Endothelial cell of umbilical vein (primary cell): ENCODE measurements at regions of chr19 and their contacts with region 1.

Region 1: DNA sequence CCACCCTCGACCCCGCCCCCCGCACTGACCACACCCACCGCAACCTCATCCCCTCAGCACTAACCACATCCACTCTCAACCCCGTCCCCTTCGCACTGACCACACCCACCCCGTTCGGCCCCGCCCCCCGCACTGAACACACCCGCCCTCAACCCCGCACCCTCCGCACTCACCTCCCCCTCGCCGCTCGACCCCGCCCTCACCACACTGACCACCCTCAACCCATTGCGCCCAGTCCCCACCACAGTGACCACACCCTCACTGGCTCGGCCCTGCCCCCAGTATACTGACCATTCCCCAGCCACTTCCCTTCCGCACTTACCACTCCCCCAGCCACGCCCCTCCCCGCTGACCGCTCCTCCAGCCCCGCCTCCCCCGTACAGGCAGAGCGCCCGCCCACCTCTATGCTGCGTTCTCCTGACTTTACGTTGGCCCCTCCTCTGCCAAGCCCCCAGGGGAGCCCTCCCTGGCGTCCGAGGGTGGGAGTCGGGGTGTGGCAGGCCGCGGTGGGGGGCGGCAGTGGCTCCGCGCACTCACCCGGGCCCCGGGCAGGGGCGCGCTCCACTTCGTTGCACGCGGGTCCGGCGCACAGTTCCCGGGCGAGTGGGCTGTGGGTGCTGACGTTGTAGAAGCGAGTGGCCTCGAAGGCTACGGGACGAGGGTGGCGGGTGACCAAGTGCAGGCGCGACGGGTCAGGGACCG is 8.5 kb downstream of the F2RL3 start:
- DNase-seq: peak; percentile 97
- H3K4me3 ChIP-seq: peak overlapping the region; percentile 50 to 60 (median 57)
- H3K27ac ChIP-seq: peak overlapping the region; percentile 39
- H3K4me1 ChIP-seq: no peaks in the 10 kb centered on the region
- H3K27me3 ChIP-seq: no peaks in the 10 kb centered on the region
- CTCF ChIP-seq: no peak
- POLR2A ChIP-seq: no peak

Region 2: GRCh38 chr19:16771618-16772017 is 125.7 kb before region 1 on chr19:
- CTCF ChIA-PET with region 1: interaction called, 5 read pairs
- POLR2A ChIA-PET with region 1: no interaction called
- dilution Hi-C with region 1: no loop called
- intact Hi-C with region 1: loop called (anchors 1 kb)
- DNase-seq: peak; percentile 81
- H3K4me3 ChIP-seq: no peak overlapping the region
- H3K27ac ChIP-seq: no peak overlapping the region
- H3K4me1 ChIP-seq: no peaks in the 10 kb centered on the region
- H3K27me3 ChIP-seq: no peaks in the 10 kb centered on the region
- CTCF ChIP-seq: peak; percentile 73 to 79
- POLR2A ChIP-seq: no peak

Region 3: GRCh38 chr19:16778796-16779411 is 118.4 kb before region 1 on chr19:
- CTCF ChIA-PET with region 1: interaction called, 13 read pairs
- POLR2A ChIA-PET with region 1: no interaction called
- dilution Hi-C with region 1: no loop called
- intact Hi-C with region 1: loop called (anchors 1 kb)
- DNase-seq: peak; percentile 59
- H3K4me3 ChIP-seq: no peak overlapping the region
- H3K27ac ChIP-seq: no peak overlapping the region
- H3K4me1 ChIP-seq: no peaks in the 10 kb centered on the region
- H3K27me3 ChIP-seq: peaks cover 1 to 6% of the 10 kb centered on the region in 2 experiments
- CTCF ChIP-seq: peak; percentile 59 to 80
- POLR2A ChIP-seq: no peak

Region 4: GRCh38 chr19:16836115-16837034 is 60.9 kb before region 1 on chr19:
- CTCF ChIA-PET with region 1: no interaction called
- POLR2A ChIA-PET with region 1: no interaction called
- dilution Hi-C with region 1: no loop called
- intact Hi-C with region 1: loop called (anchors 1 kb)
- DNase-seq: no peak
- H3K4me3 ChIP-seq: no peak overlapping the region
- H3K27ac ChIP-seq: no peak overlapping the region
- H3K4me1 ChIP-seq: peaks cover 33% of the 10 kb centered on the region
- H3K27me3 ChIP-seq: no peaks in the 10 kb centered on the region
- CTCF ChIP-seq: peak in 1 of 2 donors; percentile 4
- POLR2A ChIP-seq: no peak

Region 5: DNA sequence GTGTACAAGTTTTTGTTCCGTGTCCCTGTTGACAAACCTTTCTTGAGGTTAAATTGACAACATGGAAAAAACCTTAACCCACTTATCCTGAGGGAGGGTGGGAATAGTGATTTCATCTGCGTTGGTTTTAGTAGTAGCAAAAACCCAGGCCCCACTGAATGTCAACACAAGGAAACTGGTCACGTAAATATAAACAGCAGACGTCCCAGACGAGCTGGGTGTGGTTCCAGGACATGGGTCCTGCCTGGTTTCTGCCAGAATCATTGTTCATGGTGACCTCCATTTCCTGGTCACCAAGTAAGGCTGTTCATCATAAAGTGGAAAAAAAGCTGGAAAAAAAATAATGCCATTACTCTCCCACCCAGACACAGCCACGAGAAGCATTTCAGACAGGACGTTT is 25.4 kb before region 1 on chr19:
- CTCF ChIA-PET with region 1: no interaction called
- POLR2A ChIA-PET with region 1: no interaction called
- dilution Hi-C with region 1: no loop called
- intact Hi-C with region 1: loop called (anchors 1 kb)
- DNase-seq: peak; percentile 94
- H3K4me3 ChIP-seq: no peak overlapping the region
- H3K27ac ChIP-seq: peak overlapping the region; percentile 64
- H3K4me1 ChIP-seq: peaks cover 21% of the 10 kb centered on the region
- H3K27me3 ChIP-seq: no peaks in the 10 kb centered on the region
- CTCF ChIP-seq: no peak
- POLR2A ChIP-seq: no peak

Region 6: DNA sequence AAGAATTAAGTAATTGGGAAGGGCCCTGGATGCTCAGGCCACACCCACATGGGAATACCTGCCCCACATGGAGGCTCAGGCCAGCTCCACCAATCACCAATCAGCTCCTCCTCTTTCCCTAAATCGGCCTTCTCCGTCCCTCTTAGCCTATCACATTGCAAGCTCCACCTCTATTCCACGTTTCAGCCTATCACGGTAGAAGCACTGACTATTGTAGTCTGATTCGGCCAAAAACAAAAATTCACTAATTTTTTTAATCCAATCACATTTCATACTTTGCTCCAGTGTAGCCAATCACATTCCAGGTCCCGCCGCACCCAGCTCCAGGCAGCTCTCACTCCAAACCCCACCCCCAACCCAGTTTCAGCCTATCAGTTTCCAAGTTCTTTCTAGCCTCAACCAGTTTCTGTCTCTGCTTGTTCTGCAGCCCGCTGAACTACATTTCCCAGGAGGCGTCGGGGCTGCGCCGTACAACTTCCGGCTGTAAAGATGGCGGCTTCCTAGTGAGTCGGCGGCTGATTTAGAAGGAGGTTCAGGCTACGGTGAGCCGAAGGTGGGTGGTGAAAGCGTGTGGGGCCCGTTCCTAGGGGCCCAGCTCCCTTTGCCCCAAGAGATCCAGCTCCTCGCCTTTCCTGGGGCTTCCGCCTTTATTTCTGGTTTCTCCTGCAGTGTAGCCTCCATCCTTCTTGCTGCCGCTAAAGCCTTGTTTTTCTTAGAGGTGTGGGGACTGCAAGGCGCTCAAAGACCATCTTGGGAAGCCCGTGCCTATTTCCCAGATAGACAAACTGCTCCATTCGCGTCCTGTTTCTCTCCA is 369.9 kb after region 1 on chr19 and contains the start of gene BABAM1:
- CTCF ChIA-PET with region 1: no interaction called
- POLR2A ChIA-PET with region 1: no interaction called
- dilution Hi-C with region 1: no loop called
- intact Hi-C with region 1: loop called (anchors 2 kb)
- DNase-seq: peak; percentile 99
- H3K4me3 ChIP-seq: peak within 1 kb of the TSS; percentile 95 to 99 (median 99)
- H3K27ac ChIP-seq: peak within 1 kb of the TSS; percentile 56
- H3K4me1 ChIP-seq: peaks cover 18% of the 10 kb centered on the region
- H3K27me3 ChIP-seq: no peaks in the 10 kb centered on the region
- CTCF ChIP-seq: no peak
- POLR2A ChIP-seq: peak; percentile 82
- total RNA-seq, gene BABAM1: 110 and 118 TPM in 2 replicates